Heart left ventricle (tissue), 16 donors: ENCODE measurements at regions of chr10 and their contacts with region 1.

Region 1: DNA sequence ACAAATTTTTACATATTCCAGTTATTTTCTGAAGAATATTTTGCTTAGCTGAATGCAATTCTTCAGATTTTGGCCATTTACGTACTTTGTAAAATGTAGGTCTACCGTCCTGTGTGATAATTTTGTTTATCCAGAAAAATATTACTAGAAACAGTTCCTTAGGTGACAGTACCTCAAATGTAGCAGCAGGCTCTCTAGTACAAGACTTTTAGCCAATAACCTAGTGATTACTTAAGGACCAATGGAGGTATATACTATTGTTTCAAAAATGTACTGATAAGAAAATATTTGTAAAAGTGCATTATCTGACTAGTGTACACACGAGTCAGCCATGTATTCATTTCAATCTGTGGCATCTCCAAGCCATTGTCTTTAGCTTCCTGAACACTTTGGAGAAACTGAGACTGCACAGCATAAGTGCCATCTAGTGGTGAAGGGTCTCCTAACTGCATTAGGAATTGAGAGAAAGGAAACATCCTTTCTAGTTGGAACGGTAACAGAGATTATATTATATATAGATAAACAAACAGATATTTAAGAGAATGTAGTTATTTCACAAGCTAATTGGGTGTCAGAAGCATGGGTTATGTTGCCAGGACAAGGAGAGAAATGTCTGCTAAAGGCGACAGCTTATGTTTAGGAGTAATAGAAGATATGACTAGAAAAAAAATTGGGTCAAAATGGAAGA is 23.7 kb downstream of the RTKN2 start:
- DNase-seq: peak in 2 of 5 donors; percentile 56 to 57
- ATAC-seq: peak in 3 of 4 donors; percentile 80 to 88 (median 85)
- H3K4me3 ChIP-seq: peak overlapping the region in 3 of 12 donors; percentile 14 to 48 (median 31)
- H3K27ac ChIP-seq: peak overlapping the region in 2 of 12 donors; percentile 7 to 85
- H3K4me1 ChIP-seq: peaks cover 0 to 38% (median 6%) of the 10 kb centered on the region in 12 donors
- H3K27me3 ChIP-seq: no peaks in the 10 kb centered on the region
- CTCF ChIP-seq: peak; percentile 80 to 96 (median 88)
- POLR2A ChIP-seq: no peak

Region 2: DNA sequence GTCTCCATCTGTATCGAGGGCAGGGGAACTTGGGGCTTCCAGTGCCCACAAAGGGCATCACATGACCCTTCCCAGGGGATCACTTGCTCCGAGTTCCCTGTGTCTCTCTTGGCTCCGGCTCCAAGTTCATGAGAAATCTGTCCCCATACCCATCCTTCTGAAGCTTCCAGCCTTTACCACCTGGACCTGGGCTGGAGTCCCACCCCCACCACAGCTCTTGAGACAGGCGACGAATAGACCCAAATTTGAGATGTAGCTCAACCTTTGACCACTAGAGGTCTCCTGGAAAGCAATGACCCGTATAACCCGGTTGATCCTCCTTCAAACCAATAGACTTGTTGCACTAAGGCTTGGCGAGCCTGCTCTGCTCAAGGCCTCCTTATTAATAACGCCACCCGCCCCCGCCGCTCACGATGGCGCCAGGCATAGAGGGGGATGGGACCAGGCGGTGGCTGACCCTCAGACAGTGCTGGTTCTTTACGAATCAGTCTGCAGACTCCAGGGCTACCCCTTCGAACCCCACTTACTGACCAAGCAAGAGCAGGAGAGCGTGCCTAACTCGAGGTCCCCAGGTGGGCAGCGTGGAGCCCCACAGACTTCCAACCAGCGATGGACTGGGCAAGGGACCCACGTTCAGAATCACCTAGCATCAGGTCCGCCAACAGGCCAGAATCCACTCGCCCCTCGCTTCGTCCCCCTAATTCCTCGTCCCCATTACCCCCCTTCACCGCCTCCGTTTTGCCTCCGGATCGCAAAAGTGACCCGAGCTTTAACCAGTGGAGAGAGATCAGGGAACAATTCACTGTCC is 347.9 kb before region 1 on chr10:
- intact Hi-C with region 1: loop called in 9 of 10 experiments (anchors 1 to 5 kb)
- DNase-seq: peak; percentile 48 to 78 (median 64)
- ATAC-seq: peak; percentile 74 to 89 (median 86)
- H3K4me3 ChIP-seq: peak overlapping the region; percentile 10 to 57 (median 46)
- H3K27ac ChIP-seq: peak overlapping the region in 11 of 12 donors; percentile 31 to 77 (median 61)
- H3K4me1 ChIP-seq: peaks cover 0 to 38% (median 17%) of the 10 kb centered on the region in 12 donors
- H3K27me3 ChIP-seq: no peaks in the 10 kb centered on the region
- CTCF ChIP-seq: peak; percentile 55 to 79 (median 70)
- POLR2A ChIP-seq: no peak